ENCODE measurements at regions of chr16 and their contacts with region 1.

Region 1: GRCh38 chr16:53435066-53435688 is 906 bp downstream of the RBL2 start:
- H3K4me3 ChIP-seq: peak overlapping the region; percentile 97
- H3K27ac ChIP-seq: peak overlapping the region; percentile 82; the same call in 1 of the 2 replicates
- H3K4me1 ChIP-seq: no peaks in the 10 kb centered on the region
- CTCF ChIP-seq: no peak

Region 2: GRCh38 chr16:53465606-53466280 is 30.6 kb after region 1 on chr16:
- CTCF ChIA-PET with region 1: no interaction called
- POLR2A ChIA-PET with region 1: no interaction called
- H3K4me3 ChIP-seq: no peak overlapping the region
- H3K27ac ChIP-seq: no peak overlapping the region
- H3K4me1 ChIP-seq: no peaks in the 10 kb centered on the region
- CTCF ChIP-seq: no peak

Region 3: GRCh38 chr16:53482123-53482522 is 46.9 kb after region 1 on chr16:
- CTCF ChIA-PET with region 1: no interaction called
- POLR2A ChIA-PET with region 1: interaction called, 10 read pairs
- H3K4me3 ChIP-seq: no peak overlapping the region
- H3K27ac ChIP-seq: no peak overlapping the region
- H3K4me1 ChIP-seq: no peaks in the 10 kb centered on the region
- CTCF ChIP-seq: no peak

Region 4: DNA sequence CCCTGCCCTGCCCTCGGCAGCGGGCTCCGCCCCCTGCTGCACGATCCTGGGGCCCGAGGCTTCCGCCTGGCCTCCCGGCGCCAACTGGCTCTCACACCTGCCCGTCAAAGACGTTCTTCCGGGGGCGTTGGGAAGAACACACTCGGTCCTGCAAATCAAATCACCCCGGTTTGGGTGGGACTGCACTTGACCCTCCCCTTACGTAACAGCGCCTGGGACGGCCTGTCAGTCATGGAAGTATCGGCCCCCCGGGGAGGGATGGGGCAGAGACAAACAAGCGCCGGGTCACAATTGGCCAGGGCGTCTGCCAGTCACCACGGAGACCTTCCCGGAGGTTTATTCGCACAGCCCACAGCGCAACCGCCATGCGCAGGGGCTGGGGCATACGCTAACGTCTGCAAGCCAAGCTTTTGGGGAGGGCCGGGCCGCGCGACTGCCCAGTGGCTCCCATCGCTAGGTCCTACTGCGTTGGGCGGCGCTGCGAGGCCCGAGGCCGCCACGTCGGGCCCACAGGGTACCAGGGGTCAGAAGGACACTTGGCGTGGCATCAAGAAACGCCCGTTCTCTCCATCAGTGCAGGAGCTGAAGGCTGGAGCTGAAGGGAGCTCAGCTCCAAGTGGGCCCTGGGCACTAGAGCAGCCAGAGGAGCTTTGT is 68.2 kb after region 1 on chr16:
- CTCF ChIA-PET with region 1: no interaction called
- POLR2A ChIA-PET with region 1: interaction called, 12 read pairs
- H3K4me3 ChIP-seq: peak overlapping the region; percentile 88
- H3K27ac ChIP-seq: peak overlapping the region; percentile 71; the same call in 1 of the 2 replicates
- H3K4me1 ChIP-seq: peaks cover 16% of the 10 kb centered on the region
- CTCF ChIP-seq: peak; percentile 36; the same call in 1 of the 2 replicates

Measured in HEK293 (cell line).